PC-9 (cell line): ENCODE measurements at regions of chr12 and their contacts with region 1.

Region 1: GRCh38 chr12:108618079-108618952 is 15.4 kb downstream of the SELPLG start:
- DNase-seq: peak; percentile 58 to 77
- H3K4me3 ChIP-seq: no peak overlapping the region
- H3K27ac ChIP-seq: no peak overlapping the region
- H3K4me1 ChIP-seq: peaks cover 16% of the 10 kb centered on the region
- H3K27me3 ChIP-seq: no peaks in the 10 kb centered on the region
- CTCF ChIP-seq: peak; percentile 98

Region 2: DNA sequence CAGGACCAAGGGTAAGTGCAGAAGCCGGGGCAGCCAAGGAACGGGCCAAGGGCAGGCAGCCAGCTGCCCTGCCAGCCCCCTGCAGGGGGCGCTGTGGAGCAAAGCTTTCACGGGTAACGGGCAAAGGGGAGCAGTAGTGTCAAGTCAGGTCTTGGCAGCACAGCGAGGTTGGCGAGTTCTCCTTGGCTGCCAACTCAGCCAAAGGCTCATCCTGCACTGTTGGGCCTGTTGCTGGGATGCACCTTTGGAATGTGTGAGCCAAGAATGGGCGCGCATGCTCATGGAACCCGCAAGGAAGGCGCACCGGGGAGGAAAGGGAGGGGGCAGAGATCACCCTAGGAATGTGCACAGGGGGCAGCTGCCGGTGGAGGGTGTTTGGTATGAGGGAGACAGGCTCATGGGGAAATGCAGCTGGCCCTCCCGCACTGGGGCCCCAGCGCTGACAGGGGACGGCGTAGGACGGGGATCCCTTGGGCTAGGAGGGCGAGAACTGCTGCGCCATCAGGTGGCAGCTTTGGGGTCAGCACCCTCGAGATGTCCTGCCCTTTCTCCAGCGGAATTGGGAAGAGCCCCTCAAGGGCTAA is 705.8 kb before region 1 on chr12:
- CTCF ChIA-PET with region 1: no interaction called
- POLR2A ChIA-PET with region 1: no interaction called
- intact Hi-C with region 1: loop called (anchors 10 kb)
- DNase-seq: peak in 1 of 2 experiments; percentile 12
- H3K4me3 ChIP-seq: no peak overlapping the region
- H3K27ac ChIP-seq: no peak overlapping the region
- H3K4me1 ChIP-seq: no peaks in the 10 kb centered on the region
- H3K27me3 ChIP-seq: peaks cover 52% of the 10 kb centered on the region
- CTCF ChIP-seq: peak; percentile 58

Region 3: GRCh38 chr12:108338915-108339657 is 279.2 kb before region 1 on chr12 and contains the start of gene CMKLR1:
- CTCF ChIA-PET with region 1: no interaction called
- POLR2A ChIA-PET with region 1: no interaction called
- intact Hi-C with region 1: no loop called
- DNase-seq: no peak
- H3K4me3 ChIP-seq: no peak within 1 kb of the TSS
- H3K27ac ChIP-seq: no peak within 1 kb of the TSS
- H3K4me1 ChIP-seq: no peaks in the 10 kb centered on the region
- H3K27me3 ChIP-seq: peaks cover 81% of the 10 kb centered on the region
- CTCF ChIP-seq: no peak
- total RNA-seq, gene CMKLR1: not detected in 2 replicates

Region 4: DNA sequence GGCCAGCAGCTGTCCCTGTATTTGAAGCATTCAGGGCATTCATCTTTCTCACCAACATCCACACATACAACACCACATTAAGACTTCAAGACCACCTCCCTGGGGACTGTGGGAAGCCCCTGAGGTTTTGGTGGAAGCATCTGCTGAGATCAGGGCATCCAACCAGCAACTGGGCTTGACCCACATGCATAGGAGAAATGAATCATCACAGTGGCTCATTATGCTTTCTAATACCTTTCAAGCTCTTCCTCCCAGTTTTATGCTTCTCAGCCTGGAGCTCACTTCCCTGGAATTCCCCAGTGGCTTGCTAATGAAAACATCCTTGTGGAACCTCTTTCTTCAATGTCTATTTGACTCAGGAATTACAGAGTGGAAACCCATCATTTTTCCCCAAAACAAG is 257.8 kb before region 1 on chr12:
- CTCF ChIA-PET with region 1: no interaction called
- POLR2A ChIA-PET with region 1: no interaction called
- intact Hi-C with region 1: no loop called
- DNase-seq: no peak
- H3K4me3 ChIP-seq: no peak overlapping the region
- H3K27ac ChIP-seq: no peak overlapping the region
- H3K4me1 ChIP-seq: no peaks in the 10 kb centered on the region
- H3K27me3 ChIP-seq: peaks cover 13% of the 10 kb centered on the region; the same call in 1 of the 2 replicates
- CTCF ChIP-seq: no peak

Region 5: GRCh38 chr12:108570743-108571608 is 47.3 kb before region 1 on chr12:
- CTCF ChIA-PET with region 1: interaction called, 16 read pairs
- POLR2A ChIA-PET with region 1: no interaction called
- intact Hi-C with region 1: loop called (anchors 2 kb)
- DNase-seq: no peak
- H3K4me3 ChIP-seq: no peak overlapping the region
- H3K27ac ChIP-seq: no peak overlapping the region
- H3K4me1 ChIP-seq: peaks cover 5% of the 10 kb centered on the region
- H3K27me3 ChIP-seq: no peaks in the 10 kb centered on the region
- CTCF ChIP-seq: peak; percentile 44

Region 6: DNA sequence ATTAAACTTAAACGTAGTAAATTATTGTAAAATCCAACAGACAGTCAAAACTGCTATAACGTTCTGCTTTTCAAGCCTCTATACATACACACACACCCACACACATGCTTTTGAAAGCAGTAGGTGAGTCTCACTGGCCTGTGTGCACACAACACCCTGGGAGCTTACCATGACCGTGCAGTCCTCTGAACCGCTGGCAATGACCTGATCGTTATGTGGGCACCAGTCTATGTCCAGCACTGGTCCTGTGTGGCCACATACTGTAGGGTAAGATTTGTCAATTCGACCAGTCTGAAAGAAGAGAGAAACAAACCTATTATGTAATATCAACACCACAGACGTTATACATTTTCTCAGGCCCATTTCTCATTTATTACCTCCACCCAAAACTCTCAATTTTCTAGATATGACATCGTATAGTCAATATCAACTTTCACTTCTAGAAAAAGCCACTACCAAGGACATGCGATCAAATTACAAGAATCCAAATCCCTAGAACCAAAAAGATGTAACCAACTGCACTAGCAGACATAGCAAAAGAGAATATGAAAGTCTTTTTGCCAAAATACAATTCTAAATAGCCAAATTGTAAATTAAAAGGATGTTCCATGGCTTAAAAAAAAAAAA is 59.9 kb after region 1 on chr12:
- CTCF ChIA-PET with region 1: no interaction called
- POLR2A ChIA-PET with region 1: no interaction called
- intact Hi-C with region 1: no loop called
- DNase-seq: no peak
- H3K4me3 ChIP-seq: no peak overlapping the region
- H3K27ac ChIP-seq: no peak overlapping the region
- H3K4me1 ChIP-seq: no peaks in the 10 kb centered on the region
- H3K27me3 ChIP-seq: no peaks in the 10 kb centered on the region
- CTCF ChIP-seq: no peak